ENCODE measurements at regions of chr3 and their contacts with region 1.

Region 1: GRCh38 chr3:112642912-112643506 is 2.1 kb upstream of the CCDC80 start:
- DNase-seq: peak; percentile 58 to 87 (median 70)
- ATAC-seq: peak; percentile 98
- H3K4me3 ChIP-seq: no peak overlapping the region
- H3K27ac ChIP-seq: no peak overlapping the region
- H3K4me1 ChIP-seq: peaks cover 0 to 9% of the 10 kb centered on the region in 2 experiments; a peak in 3 of 5 replicates
- H3K27me3 ChIP-seq: peaks cover 0 to 7% of the 10 kb centered on the region in 2 experiments; a peak in 2 of 5 replicates
- CTCF ChIP-seq: peak; percentile 79 to 84 (median 83)
- EP300 ChIP-seq: no peak
- POLR2A ChIP-seq: no peak
- RAD21 ChIP-seq: peak; percentile 84 to 86

Region 2: GRCh38 chr3:112699436-112699978 is 56.5 kb after region 1 on chr3:
- CTCF ChIA-PET with region 1: no interaction called
- POLR2A ChIA-PET with region 1: no interaction called
- in situ Hi-C with region 1: no loop called
- intact Hi-C with region 1: loop called (anchors 10 kb)
- DNase-seq: peak in 1 of 4 experiments; percentile 11
- ATAC-seq: no peak
- H3K4me3 ChIP-seq: no peak overlapping the region
- H3K27ac ChIP-seq: no peak overlapping the region
- H3K4me1 ChIP-seq: peaks cover 0 to 4% of the 10 kb centered on the region in 2 experiments; a peak in 3 of 5 replicates
- H3K27me3 ChIP-seq: no peaks in the 10 kb centered on the region
- CTCF ChIP-seq: no peak
- EP300 ChIP-seq: no peak
- POLR2A ChIP-seq: no peak
- RAD21 ChIP-seq: no peak

Region 3: GRCh38 chr3:112814266-112814665 is 171.3 kb after region 1 on chr3:
- CTCF ChIA-PET with region 1: interaction called, 9 read pairs
- POLR2A ChIA-PET with region 1: no interaction called
- in situ Hi-C with region 1: no loop called
- intact Hi-C with region 1: loop called (anchors 1 kb)
- DNase-seq: peak in 1 of 4 experiments; percentile 19
- ATAC-seq: peak; percentile 65
- H3K4me3 ChIP-seq: no peak overlapping the region
- H3K27ac ChIP-seq: no peak overlapping the region
- H3K4me1 ChIP-seq: peaks cover 4 to 27% of the 10 kb centered on the region in 2 experiments
- H3K27me3 ChIP-seq: no peaks in the 10 kb centered on the region
- CTCF ChIP-seq: peak in 2 of 3 experiments; percentile 11 to 44; a peak in 2 of 6 replicates
- EP300 ChIP-seq: no peak
- POLR2A ChIP-seq: no peak
- RAD21 ChIP-seq: peak; percentile 35 to 62; a peak in 3 of 4 replicates

Region 4: GRCh38 chr3:112958811-112959560 is 316.0 kb after region 1 on chr3:
- CTCF ChIA-PET with region 1: no interaction called
- POLR2A ChIA-PET with region 1: no interaction called
- in situ Hi-C with region 1: no loop called
- intact Hi-C with region 1: no loop called
- DNase-seq: peak in 2 of 4 experiments; percentile 6 to 23
- ATAC-seq: peak; percentile 56
- H3K4me3 ChIP-seq: no peak overlapping the region
- H3K27ac ChIP-seq: peak overlapping the region; percentile 55; the same call in 1 of the 3 replicates
- H3K4me1 ChIP-seq: no peaks in the 10 kb centered on the region; a peak in 1 of 5 replicates
- H3K27me3 ChIP-seq: no peaks in the 10 kb centered on the region
- CTCF ChIP-seq: no peak
- EP300 ChIP-seq: no peak
- POLR2A ChIP-seq: no peak
- RAD21 ChIP-seq: no peak

Region 5: DNA sequence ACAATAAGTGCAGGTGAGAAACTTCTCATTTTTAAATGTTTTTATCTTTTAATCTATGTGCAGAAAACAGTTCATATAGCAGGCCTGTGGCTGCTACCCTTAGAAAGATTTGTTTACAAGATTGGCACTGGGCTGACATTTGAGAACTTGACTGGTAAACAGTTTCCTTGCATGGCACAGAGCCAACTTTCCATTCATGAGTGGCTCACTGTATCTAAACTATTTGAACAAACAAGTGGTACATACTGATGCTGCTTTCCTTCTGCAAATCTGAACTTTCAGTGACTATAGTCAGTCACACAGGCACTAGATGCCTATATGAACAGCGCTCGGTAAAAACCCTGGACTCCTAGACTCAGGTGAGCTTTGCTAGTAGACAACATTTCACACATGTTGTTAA is 341.5 kb after region 1 on chr3:
- CTCF ChIA-PET with region 1: interaction called, 3 read pairs
- POLR2A ChIA-PET with region 1: no interaction called
- in situ Hi-C with region 1: loop called (anchors 10 kb)
- intact Hi-C with region 1: loop called (anchors 2 kb)
- DNase-seq: no peak
- ATAC-seq: no peak
- H3K4me3 ChIP-seq: no peak overlapping the region
- H3K27ac ChIP-seq: no peak overlapping the region
- H3K4me1 ChIP-seq: no peaks in the 10 kb centered on the region; a peak in 1 of 5 replicates
- H3K27me3 ChIP-seq: no peaks in the 10 kb centered on the region
- CTCF ChIP-seq: no peak
- EP300 ChIP-seq: no peak
- POLR2A ChIP-seq: no peak
- RAD21 ChIP-seq: no peak

Region 6: DNA sequence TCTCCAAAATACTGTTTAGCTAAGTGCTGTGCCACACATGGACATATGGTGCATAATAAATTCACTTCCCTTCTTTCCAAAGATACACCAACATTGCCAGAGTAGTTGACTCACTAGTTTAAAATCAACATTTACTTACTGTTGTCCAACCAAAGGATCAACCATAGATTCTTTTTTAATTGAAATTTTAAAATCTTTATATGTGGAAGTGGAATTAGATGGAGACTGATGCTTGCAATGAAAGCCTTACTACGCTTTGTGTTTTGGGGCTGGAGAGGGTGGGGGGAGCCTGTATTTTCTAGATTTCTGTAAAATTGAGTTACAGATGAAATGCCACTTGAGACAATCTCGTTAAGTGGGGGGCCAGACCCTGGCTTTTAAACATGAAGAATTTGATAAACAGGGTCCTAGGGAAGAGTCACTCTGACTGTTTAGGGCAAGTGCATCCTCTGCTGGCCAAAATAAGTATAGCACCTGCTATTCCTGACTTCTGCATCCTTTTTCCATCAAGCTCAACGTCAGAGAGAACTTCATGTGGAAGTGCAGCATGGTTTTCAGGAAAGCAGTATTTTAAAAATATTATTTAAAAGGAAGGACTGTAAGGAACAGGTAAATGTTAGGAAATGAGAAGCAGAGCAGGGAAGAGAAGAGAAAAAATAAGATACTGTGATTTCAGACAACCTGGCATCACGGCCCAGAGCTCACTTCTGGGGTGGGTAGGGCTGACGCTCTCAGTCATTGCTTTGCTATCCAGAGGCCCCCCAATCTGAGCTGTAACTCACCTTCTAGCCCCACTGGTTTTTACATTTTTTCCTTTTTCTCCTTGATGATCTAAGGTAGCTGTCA is 645.0 kb after region 1 on chr3:
- CTCF ChIA-PET with region 1: no interaction called
- POLR2A ChIA-PET with region 1: no interaction called
- in situ Hi-C with region 1: no loop called
- intact Hi-C with region 1: loop called (anchors 5 kb)
- DNase-seq: peak; percentile 47 to 63 (median 55)
- ATAC-seq: peak; percentile 80
- H3K4me3 ChIP-seq: no peak overlapping the region
- H3K27ac ChIP-seq: no peak overlapping the region
- H3K4me1 ChIP-seq: peaks cover 0 to 9% of the 10 kb centered on the region in 2 experiments; a peak in 3 of 5 replicates
- H3K27me3 ChIP-seq: peaks cover 0 to 21% of the 10 kb centered on the region in 2 experiments; a peak in 2 of 5 replicates
- CTCF ChIP-seq: peak; percentile 78 to 90 (median 86)
- EP300 ChIP-seq: no peak
- POLR2A ChIP-seq: no peak
- RAD21 ChIP-seq: peak; percentile 80 to 82

Measured in K562 (cell line).